Naive thymus-derived CD4-positive, alpha-beta T cell (primary cell): ENCODE measurements at regions of chr7 and their contacts with region 1.

Region 1: DNA sequence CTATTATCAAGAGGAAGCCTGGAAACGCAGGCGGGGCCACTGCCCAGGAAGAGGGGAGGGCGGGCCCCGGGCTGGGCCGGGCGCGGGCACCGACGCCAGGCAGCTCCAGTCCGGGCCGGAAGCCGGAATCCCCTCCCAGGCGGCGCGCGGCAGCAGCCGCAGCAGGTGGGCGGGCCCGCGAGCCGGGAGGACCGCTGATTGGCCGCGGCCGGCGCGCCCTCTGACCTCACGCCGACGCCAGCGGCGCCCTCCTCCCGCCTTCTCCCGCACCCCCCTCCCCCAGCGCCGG is 438 bp downstream of the BCL7B start:
- DNase-seq: peak; percentile 86 to 95 (median 91)
- ATAC-seq: peak; percentile 93
- H3K4me3 ChIP-seq: peak overlapping the region; percentile 81
- H3K4me3 Mint-ChIP-seq: peak overlapping the region; percentile 88 to 97 (median 93)
- H3K27ac ChIP-seq: peak overlapping the region; percentile 100
- H3K27ac Mint-ChIP-seq: peak overlapping the region; percentile 92 to 98 (median 95)
- H3K4me1 ChIP-seq: peaks cover 17 to 23% of the 10 kb centered on the region in 2 donors
- H3K4me1 Mint-ChIP-seq: peaks cover 24 to 41% (median 33%) of the 10 kb centered on the region in 7 donors
- H3K27me3 ChIP-seq: no peaks in the 10 kb centered on the region
- H3K27me3 Mint-ChIP-seq: no peaks in the 10 kb centered on the region

Region 2: GRCh38 chr7:72924733-72925545 is 632.1 kb before region 1 on chr7 and contains the start of gene POM121:
- CTCF ChIA-PET with region 1: interaction called, 3 read pairs
- POLR2A ChIA-PET with region 1: no interaction called
- intact Hi-C with region 1: loop called in 1 of 2 experiments (anchors 10 kb)
- DNase-seq: peak; percentile 79 to 88 (median 86)
- ATAC-seq: peak; percentile 97
- H3K4me3 ChIP-seq: peak within 1 kb of the TSS; percentile 86
- H3K4me3 Mint-ChIP-seq: peak within 1 kb of the TSS; percentile 84 to 100 (median 98)
- H3K27ac ChIP-seq: peak within 1 kb of the TSS; percentile 93
- H3K27ac Mint-ChIP-seq: peak within 1 kb of the TSS; percentile 94 to 100 (median 98)
- H3K4me1 ChIP-seq: peaks cover 5 to 14% of the 10 kb centered on the region in 2 donors
- H3K4me1 Mint-ChIP-seq: peaks cover 21 to 50% (median 43%) of the 10 kb centered on the region in 7 donors
- H3K27me3 ChIP-seq: no peaks in the 10 kb centered on the region
- H3K27me3 Mint-ChIP-seq: no peaks in the 10 kb centered on the region
- total RNA-seq, gene POM121: 60.8 to 73.4 (median 64.8) TPM

Region 3: DNA sequence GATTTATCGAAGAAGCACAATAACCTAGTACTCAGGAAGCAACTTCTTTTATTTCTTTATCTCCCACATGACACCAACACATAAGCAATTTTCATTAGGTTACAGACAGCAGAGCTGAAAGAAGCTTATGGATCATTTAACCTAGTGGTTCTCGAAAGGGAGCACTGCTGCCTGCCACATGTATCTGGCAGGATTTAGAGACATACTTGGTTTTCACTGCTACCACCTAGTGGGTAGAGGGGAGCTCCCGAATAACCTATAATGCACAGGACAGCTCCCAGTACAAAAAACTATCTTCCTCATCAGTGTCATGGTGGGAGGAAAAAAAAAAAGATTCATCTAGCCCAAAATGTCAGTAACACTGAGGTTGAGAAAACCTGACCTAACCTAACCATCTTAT is 89.0 kb before region 1 on chr7:
- CTCF ChIA-PET with region 1: no interaction called
- POLR2A ChIA-PET with region 1: no interaction called
- intact Hi-C with region 1: no loop called
- DNase-seq: no peak
- ATAC-seq: no peak
- H3K4me3 ChIP-seq: no peak overlapping the region
- H3K4me3 Mint-ChIP-seq: no peak overlapping the region
- H3K27ac ChIP-seq: no peak overlapping the region
- H3K27ac Mint-ChIP-seq: no peak overlapping the region
- H3K4me1 ChIP-seq: no peaks in the 10 kb centered on the region
- H3K4me1 Mint-ChIP-seq: peaks cover 0 to 4% (median 0%) of the 10 kb centered on the region in 7 donors
- H3K27me3 ChIP-seq: no peaks in the 10 kb centered on the region
- H3K27me3 Mint-ChIP-seq: no peaks in the 10 kb centered on the region